AG04449 (cell line): ENCODE measurements at regions of chr2 and their contacts with region 1.

Region 1: GRCh38 chr2:205712508-205712907 is 30.2 kb downstream of the NRP2 start:
- DNase-seq: peak; percentile 41
- H3K4me3 ChIP-seq: no peak overlapping the region
- CTCF ChIP-seq: no peak

Region 2: DNA sequence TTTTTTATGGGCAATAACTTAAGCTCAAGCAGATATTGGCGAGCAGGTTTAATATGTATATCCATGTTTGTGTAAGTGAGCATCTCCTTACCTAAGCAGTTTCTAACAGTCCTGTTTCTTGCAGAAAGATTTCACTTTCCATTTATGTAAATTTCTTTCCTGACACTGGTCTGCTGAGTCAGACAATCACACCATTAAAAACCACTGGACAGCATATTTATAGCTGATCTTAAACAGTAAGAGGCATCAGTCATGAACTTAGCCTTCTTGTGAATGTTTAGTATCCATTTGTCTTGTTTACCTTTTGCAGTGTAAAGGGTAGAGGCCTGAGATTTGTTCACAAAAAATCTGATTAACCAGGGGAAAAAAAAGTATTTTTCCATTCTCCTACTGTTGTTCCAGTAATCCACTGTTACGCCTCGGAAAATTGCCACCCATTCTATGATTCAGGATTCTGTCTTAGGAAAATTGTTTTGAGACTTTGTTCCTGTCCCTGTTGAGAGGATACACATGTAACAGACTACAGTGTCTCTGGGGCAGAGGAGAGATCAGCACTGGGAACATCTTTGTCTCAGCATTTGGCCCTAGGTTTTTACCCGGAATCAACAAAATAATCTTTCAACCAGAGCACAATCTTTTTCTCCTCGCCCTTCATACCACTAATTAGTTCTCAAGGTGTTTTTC is 551.2 kb before region 1 on chr2:
- CTCF ChIA-PET with region 1: no interaction called
- POLR2A ChIA-PET with region 1: no interaction called
- DNase-seq: no peak
- H3K4me3 ChIP-seq: no peak overlapping the region
- CTCF ChIP-seq: no peak

Region 3: GRCh38 chr2:205700331-205701132 is 12.0 kb before region 1 on chr2:
- CTCF ChIA-PET with region 1: interaction called, 4 read pairs
- POLR2A ChIA-PET with region 1: interaction called, 10 read pairs
- DNase-seq: no peak
- H3K4me3 ChIP-seq: no peak overlapping the region
- CTCF ChIP-seq: no peak

Region 4: DNA sequence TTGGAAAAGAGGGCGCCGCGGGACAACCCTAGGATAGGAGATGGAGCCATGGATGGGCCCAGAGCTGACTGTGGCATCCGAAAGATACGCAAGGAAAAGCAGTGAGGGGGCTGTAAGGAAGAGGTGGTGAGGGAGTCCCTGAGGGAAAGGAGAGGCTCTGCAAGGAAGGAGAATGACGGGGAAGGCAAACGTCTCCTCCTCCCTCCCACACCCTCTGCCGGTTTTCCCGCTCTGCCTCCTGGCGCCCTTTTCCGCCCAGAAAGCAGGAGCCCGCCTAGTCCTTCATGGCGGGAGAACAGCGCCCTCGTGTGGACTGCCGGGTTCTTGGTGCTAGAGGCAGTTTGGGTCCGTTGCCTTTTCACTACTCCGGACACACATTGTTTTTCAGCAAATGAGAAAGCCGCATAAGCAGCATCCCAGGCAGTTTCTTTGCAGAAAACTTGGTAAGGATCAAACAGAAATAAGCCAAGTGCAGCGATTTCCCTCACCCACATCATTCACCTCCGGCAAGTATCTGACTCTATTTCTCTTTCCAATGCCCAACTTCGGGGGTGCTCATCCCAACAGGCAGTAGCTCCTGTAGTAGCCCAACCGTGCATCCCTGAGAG is 173.1 kb after region 1 on chr2:
- CTCF ChIA-PET with region 1: no interaction called
- POLR2A ChIA-PET with region 1: no interaction called
- DNase-seq: no peak
- H3K4me3 ChIP-seq: no peak overlapping the region
- CTCF ChIP-seq: peak; percentile 91

Region 5: DNA sequence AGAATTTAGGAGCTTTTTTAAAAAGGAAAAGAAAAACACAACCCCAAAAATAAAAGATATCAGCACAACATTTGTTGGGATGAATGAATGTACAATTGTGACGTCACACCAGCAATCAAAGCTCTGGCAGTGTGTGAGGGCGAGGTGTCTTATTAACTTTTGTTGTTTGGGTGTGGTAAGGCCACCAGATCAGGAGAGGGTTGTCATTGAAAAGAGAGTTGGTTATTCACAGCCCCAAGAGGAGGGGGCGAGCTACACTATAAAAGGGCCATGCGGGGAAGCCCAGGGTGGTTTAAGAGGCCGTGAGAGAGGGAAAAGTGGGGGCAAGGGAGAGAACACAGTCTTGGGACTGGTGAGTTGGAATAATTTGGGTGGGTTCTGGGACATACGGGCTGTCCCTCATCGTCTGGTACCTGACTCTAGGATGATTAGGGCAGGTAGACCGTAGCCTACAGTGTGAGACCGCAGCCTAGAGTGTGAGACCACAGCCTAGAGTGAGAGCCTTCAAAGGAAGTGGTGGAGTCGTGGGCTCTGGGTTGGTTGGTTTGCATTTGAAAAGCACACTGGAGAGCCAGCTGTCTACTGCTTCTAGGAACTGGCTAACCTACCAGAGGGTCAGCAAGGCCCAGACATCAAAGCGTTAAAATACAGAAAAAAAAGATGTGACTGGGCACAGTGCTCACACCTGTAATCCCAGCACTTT is 245.1 kb after region 1 on chr2:
- CTCF ChIA-PET with region 1: no interaction called
- POLR2A ChIA-PET with region 1: no interaction called
- DNase-seq: no peak
- H3K4me3 ChIP-seq: no peak overlapping the region
- CTCF ChIP-seq: no peak